B cell (primary cell): ENCODE measurements at regions of chr11 and their contacts with region 1.

Region 1: DNA sequence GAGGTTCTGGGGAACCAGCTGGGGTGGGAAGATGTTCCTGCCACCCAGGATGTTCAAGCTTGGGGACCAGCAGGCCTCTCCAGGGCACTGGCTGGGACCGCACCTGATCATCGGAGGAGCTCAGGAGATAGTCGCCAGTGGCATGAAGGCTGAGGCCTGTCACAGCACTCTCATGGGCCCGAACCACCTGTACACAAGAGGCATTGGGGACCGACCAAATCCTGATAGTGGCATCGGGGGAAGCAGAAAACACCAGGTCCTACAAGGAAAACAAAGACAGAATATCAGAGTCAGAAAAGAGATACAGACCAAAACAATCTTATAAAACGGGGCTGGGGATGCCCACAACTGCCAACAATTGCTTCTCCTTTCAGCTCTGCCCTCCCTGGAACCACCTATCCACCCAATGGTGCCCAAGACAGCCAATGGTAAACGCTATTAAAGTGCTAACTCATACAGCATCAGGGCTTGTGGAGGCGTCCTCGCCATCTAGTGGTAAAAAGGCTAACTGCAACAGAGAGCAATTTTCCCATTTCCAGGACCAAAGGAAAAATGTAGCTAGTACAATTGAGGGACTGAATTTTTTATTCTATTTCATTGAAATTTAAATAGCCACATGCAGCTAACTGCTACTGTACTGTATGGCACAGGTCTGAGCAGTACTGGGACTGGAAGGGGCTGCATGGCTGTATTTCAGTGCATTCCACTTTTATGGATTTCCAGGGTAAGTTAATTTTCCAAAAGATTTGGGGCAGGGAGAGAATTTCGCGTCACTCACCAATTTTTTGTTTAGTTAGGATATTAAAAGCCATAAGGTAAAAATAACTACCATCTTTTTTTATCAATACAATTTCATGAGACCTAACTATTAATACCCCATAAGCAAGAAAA is 7.1 kb downstream of the PRPF19 start:
- DNase-seq: peak; percentile 69
- ATAC-seq: peak; percentile 78
- H3K4me3 ChIP-seq: no peak overlapping the region
- H3K4me3 Mint-ChIP-seq: no peak overlapping the region
- H3K27ac ChIP-seq: no peak overlapping the region
- H3K27ac Mint-ChIP-seq: no peak overlapping the region
- H3K4me1 ChIP-seq: peaks cover 0 to 3% of the 10 kb centered on the region in 2 donors
- H3K4me1 Mint-ChIP-seq: peaks cover 10% of the 10 kb centered on the region
- H3K27me3 ChIP-seq: no peaks in the 10 kb centered on the region
- H3K27me3 Mint-ChIP-seq: no peaks in the 10 kb centered on the region
- CTCF ChIP-seq: peak; percentile 97

Region 2: GRCh38 chr11:60706931-60707330 is 192.4 kb before region 1 on chr11:
- CTCF ChIA-PET with region 1: no interaction called
- POLR2A ChIA-PET with region 1: no interaction called
- intact Hi-C with region 1: no loop called
- DNase-seq: no peak
- ATAC-seq: no peak
- H3K4me3 ChIP-seq: no peak overlapping the region
- H3K4me3 Mint-ChIP-seq: no peak overlapping the region
- H3K27ac ChIP-seq: no peak overlapping the region
- H3K27ac Mint-ChIP-seq: no peak overlapping the region
- H3K4me1 ChIP-seq: no peaks in the 10 kb centered on the region
- H3K4me1 Mint-ChIP-seq: no peaks in the 10 kb centered on the region
- H3K27me3 ChIP-seq: peaks cover 0 to 4% (median 0%) of the 10 kb centered on the region in 4 experiments
- H3K27me3 Mint-ChIP-seq: peaks cover 22% of the 10 kb centered on the region
- CTCF ChIP-seq: no peak

Region 3: DNA sequence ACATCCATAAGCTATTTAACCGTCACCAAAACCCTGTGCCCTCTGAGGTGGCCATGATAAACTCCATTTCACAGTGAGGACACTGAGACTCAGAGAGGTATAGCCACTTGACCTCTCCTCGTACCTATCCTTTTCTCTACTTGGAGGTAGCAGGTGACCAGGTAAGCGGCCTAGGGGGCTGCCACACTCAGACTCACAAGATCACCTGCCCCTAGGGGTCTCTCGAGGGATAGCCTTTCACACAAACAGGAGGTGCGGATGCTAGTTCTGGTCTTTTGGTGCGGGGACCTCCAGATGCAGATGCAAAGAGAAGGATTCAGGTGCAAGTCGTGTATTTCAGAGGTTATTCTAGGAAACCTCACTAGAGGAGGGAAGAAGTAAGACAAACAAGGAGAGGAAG is 160.2 kb before region 1 on chr11:
- CTCF ChIA-PET with region 1: no interaction called
- POLR2A ChIA-PET with region 1: no interaction called
- intact Hi-C with region 1: no loop called
- DNase-seq: no peak
- ATAC-seq: no peak
- H3K4me3 ChIP-seq: no peak overlapping the region
- H3K4me3 Mint-ChIP-seq: no peak overlapping the region
- H3K27ac ChIP-seq: no peak overlapping the region
- H3K27ac Mint-ChIP-seq: no peak overlapping the region
- H3K4me1 ChIP-seq: no peaks in the 10 kb centered on the region
- H3K4me1 Mint-ChIP-seq: no peaks in the 10 kb centered on the region
- H3K27me3 ChIP-seq: peaks cover 0 to 8% (median 0%) of the 10 kb centered on the region in 4 experiments
- H3K27me3 Mint-ChIP-seq: peaks cover 29% of the 10 kb centered on the region
- CTCF ChIP-seq: no peak

Region 4: GRCh38 chr11:60756307-60757032 is 142.8 kb before region 1 on chr11 and contains the start of gene MS4A15:
- CTCF ChIA-PET with region 1: no interaction called
- POLR2A ChIA-PET with region 1: no interaction called
- intact Hi-C with region 1: no loop called
- DNase-seq: peak; percentile 55
- ATAC-seq: no peak
- H3K4me3 ChIP-seq: no peak within 1 kb of the TSS
- H3K4me3 Mint-ChIP-seq: no peak within 1 kb of the TSS
- H3K27ac ChIP-seq: no peak within 1 kb of the TSS
- H3K27ac Mint-ChIP-seq: no peak within 1 kb of the TSS
- H3K4me1 ChIP-seq: peaks cover 3 to 4% of the 10 kb centered on the region in 2 donors
- H3K4me1 Mint-ChIP-seq: peaks cover 23% of the 10 kb centered on the region
- H3K27me3 ChIP-seq: peaks cover 0 to 7% (median 1%) of the 10 kb centered on the region in 4 experiments
- H3K27me3 Mint-ChIP-seq: peaks cover 36% of the 10 kb centered on the region
- CTCF ChIP-seq: peak; percentile 58
- total RNA-seq, gene MS4A15: not detected in 2 replicates

Region 5: DNA sequence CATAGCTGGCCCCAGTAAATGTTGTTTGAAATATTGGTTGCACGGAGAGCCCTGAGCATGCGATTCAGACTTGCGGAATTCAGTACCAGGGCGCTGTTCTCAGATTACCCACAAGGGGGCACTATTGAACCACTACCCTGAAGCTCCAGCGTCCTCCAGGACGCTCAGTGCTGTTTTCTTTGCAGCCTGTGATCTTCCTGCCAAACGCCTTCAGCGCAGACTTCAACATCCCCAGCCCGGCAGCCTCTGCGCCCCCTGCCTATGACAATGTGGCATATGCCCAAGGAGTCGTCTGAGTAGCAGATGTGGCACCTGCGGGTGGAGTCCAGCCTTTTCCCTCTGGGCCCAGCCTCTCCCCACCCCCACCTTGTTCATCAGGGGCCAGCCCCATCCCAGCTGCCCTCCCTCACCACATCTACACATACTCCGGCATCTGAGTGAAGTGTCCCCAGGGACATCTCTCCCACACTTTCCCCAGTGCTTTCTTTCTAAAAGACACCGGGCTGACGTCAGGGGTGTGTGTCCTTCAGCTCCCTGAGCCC is 123.8 kb before region 1 on chr11:
- CTCF ChIA-PET with region 1: no interaction called
- POLR2A ChIA-PET with region 1: no interaction called
- intact Hi-C with region 1: loop called (anchors 1 kb)
- DNase-seq: peak; percentile 89
- ATAC-seq: peak; percentile 96
- H3K4me3 ChIP-seq: no peak overlapping the region
- H3K4me3 Mint-ChIP-seq: no peak overlapping the region
- H3K27ac ChIP-seq: no peak overlapping the region
- H3K27ac Mint-ChIP-seq: peak overlapping the region; percentile 1
- H3K4me1 ChIP-seq: peaks cover 3 to 11% of the 10 kb centered on the region in 2 donors
- H3K4me1 Mint-ChIP-seq: peaks cover 15% of the 10 kb centered on the region
- H3K27me3 ChIP-seq: peaks cover 0 to 9% (median 1%) of the 10 kb centered on the region in 4 experiments
- H3K27me3 Mint-ChIP-seq: peaks cover 12% of the 10 kb centered on the region
- CTCF ChIP-seq: peak; percentile 88

Region 6: GRCh38 chr11:60887556-60887955 is 11.7 kb before region 1 on chr11:
- CTCF ChIA-PET with region 1: interaction called, 13 read pairs
- POLR2A ChIA-PET with region 1: interaction called, 3 read pairs
- intact Hi-C with region 1: no loop called
- DNase-seq: peak; percentile 30
- ATAC-seq: no peak
- H3K4me3 ChIP-seq: no peak overlapping the region
- H3K4me3 Mint-ChIP-seq: no peak overlapping the region
- H3K27ac ChIP-seq: no peak overlapping the region
- H3K27ac Mint-ChIP-seq: no peak overlapping the region
- H3K4me1 ChIP-seq: no peaks in the 10 kb centered on the region
- H3K4me1 Mint-ChIP-seq: no peaks in the 10 kb centered on the region
- H3K27me3 ChIP-seq: no peaks in the 10 kb centered on the region
- H3K27me3 Mint-ChIP-seq: no peaks in the 10 kb centered on the region
- CTCF ChIP-seq: no peak

Region 7: DNA sequence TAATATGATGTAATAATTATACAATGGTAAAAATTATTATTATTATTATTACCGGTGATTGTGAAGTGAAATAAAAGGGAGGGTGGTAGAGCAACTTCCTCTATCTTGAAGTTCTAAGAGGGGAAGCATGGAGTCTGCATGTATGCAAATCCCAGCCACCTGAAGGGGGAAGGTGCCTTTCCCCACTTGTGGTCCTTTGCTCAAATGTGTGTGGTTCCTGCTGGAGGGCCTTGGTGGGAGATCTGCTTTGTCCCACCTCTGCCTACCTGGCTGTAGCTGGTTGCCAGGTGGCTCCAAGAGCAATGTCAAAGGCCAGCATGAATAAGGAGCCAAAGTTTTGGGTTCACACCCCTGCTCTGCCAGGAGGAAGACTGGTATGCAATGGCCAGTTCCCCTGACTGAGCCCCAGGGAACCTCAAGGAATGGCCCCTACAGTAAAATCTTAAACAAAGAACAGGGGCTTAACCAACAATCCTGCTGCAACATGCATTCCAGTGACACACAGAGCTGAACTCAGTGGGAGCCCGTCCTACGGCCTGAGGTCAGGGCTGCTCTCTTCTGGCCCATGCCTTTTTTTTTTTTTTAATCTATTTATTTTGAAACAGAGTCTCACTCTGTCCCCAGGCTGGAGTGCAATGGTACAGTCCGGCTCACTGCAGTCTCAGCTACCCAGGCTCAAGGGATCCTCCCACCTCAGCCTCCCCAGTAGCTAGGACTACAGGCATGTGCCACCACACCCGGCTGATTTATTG is 33.5 kb after region 1 on chr11:
- CTCF ChIA-PET with region 1: interaction called, 12 read pairs
- POLR2A ChIA-PET with region 1: no interaction called
- intact Hi-C with region 1: no loop called
- DNase-seq: peak; percentile 80
- ATAC-seq: peak; percentile 52
- H3K4me3 ChIP-seq: peak overlapping the region in 1 of 5 experiments; percentile 56
- H3K4me3 Mint-ChIP-seq: peak overlapping the region; percentile 74
- H3K27ac ChIP-seq: peak overlapping the region; percentile 72 to 90
- H3K27ac Mint-ChIP-seq: peak overlapping the region; percentile 91
- H3K4me1 ChIP-seq: peaks cover 26 to 44% of the 10 kb centered on the region in 2 donors
- H3K4me1 Mint-ChIP-seq: peaks cover 46% of the 10 kb centered on the region
- H3K27me3 ChIP-seq: no peaks in the 10 kb centered on the region
- H3K27me3 Mint-ChIP-seq: no peaks in the 10 kb centered on the region
- CTCF ChIP-seq: no peak

Region 8: DNA sequence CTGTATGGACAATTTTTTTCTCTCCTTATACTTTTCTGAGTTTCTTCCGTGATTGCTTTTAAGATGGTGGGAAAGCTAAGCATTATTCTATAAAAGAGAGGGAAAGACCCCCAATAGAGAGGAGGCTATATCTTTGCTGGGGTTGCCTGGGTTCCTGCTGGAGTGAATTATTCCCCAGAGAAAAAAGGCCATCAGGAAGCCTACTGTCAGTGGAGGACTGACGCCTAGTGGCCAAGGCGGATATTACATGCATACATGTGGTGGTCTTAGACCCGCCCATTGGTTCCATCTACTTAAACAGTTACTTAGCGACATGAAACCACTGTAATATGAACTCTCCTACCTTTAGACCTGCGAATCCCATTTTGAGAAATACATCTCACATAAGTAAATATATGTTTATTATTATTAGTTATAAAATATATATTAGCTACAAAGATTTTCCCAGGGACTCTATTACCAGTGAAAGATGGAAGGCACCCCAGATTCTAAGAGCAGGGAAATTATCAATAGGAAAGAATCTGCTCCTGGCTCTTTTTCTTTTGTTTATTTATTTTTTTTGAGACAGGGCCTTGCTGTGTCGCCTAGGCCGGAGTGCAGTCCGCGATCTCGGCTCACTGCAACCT is 288.3 kb after region 1 on chr11:
- CTCF ChIA-PET with region 1: interaction called, 19 read pairs
- POLR2A ChIA-PET with region 1: no interaction called
- intact Hi-C with region 1: loop called (anchors 1 kb)
- DNase-seq: peak; percentile 89
- ATAC-seq: peak; percentile 98
- H3K4me3 ChIP-seq: no peak overlapping the region
- H3K4me3 Mint-ChIP-seq: no peak overlapping the region
- H3K27ac ChIP-seq: no peak overlapping the region
- H3K27ac Mint-ChIP-seq: no peak overlapping the region
- H3K4me1 ChIP-seq: no peaks in the 10 kb centered on the region
- H3K4me1 Mint-ChIP-seq: peaks cover 3% of the 10 kb centered on the region
- H3K27me3 ChIP-seq: no peaks in the 10 kb centered on the region
- H3K27me3 Mint-ChIP-seq: peaks cover 5% of the 10 kb centered on the region
- CTCF ChIP-seq: peak; percentile 99